Activated CD8-positive, alpha-beta T cell treated with anti-CD3 and anti-CD28 coated beads, Interleukin-2, amount 10 ng/mL, durations not matched to agents 7 days and 5 days (primary cell): ENCODE measurements at regions of chr9 and their contacts with region 1.

Region 1: DNA sequence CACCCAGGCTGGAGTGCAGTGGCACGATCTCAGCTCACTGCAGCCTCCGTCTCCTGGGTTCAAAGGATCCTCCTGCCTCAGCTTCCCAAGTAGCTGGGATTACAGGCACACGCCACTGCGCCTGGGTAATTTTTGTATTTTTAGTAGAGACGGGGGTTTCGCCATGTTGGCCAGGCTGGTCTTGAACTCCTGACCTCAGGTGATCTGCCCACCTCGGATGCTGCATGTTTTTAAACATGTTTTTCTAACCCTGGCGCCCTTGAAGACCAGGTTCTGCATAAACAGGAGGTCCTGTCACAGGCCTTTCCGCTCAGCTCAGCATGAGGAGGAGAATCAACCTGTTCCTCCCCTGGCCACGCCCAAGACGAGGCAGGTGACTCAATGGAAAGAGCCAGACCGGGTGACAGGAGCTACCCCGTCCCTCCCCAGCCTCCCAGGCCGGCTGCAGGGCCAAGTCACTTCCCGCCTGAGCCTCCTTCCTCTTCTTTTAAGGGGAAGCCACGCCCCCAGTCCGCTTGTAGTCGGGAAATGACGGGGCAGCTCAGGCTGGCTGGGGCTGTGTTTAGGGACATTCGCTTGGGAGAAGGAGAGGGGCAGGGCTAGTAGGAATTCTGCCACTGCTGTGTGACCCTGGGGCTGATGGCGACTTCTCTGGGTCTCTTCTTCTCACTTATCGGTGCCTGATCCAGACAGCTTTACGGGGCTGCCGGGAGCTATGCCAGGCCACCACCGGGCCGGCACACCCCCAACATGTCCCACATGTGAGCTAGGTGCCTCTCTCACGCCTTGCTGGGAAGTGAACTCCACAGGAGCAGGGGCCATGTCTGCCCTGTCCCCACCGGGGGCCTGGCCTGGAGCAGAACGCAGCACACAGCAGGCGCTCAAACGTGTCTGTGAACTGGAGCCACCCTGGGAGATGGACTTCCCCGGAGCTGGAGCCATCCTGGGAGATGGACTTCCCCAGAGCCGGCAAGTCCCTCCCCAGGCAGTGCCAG is 6.1 kb downstream of the NOTCH1 start:
- DNase-seq: peak; percentile 97
- ATAC-seq: peak; percentile 86
- H3K4me3 Mint-ChIP-seq: peak overlapping the region; percentile 79
- H3K27ac Mint-ChIP-seq: peak overlapping the region; percentile 99
- H3K4me1 Mint-ChIP-seq: peaks cover 80% of the 10 kb centered on the region
- H3K27me3 Mint-ChIP-seq: no peaks in the 10 kb centered on the region

Region 2: GRCh38 chr9:136488247-136489214 is 51.2 kb before region 1 on chr9:
- CTCF ChIA-PET with region 1: interaction called, 30 read pairs
- POLR2A ChIA-PET with region 1: interaction called, 4 read pairs
- DNase-seq: peak; percentile 81
- ATAC-seq: peak; percentile 34
- H3K4me3 Mint-ChIP-seq: no peak overlapping the region
- H3K27ac Mint-ChIP-seq: no peak overlapping the region
- H3K4me1 Mint-ChIP-seq: peaks cover 8% of the 10 kb centered on the region
- H3K27me3 Mint-ChIP-seq: no peaks in the 10 kb centered on the region

Region 3: GRCh38 chr9:136527721-136528691 is 11.7 kb before region 1 on chr9:
- CTCF ChIA-PET with region 1: interaction called, 8 read pairs
- POLR2A ChIA-PET with region 1: interaction called, 16 read pairs
- DNase-seq: no peak
- ATAC-seq: peak; percentile 31
- H3K4me3 Mint-ChIP-seq: no peak overlapping the region
- H3K27ac Mint-ChIP-seq: peak overlapping the region; percentile 43
- H3K4me1 Mint-ChIP-seq: peaks cover 43% of the 10 kb centered on the region
- H3K27me3 Mint-ChIP-seq: no peaks in the 10 kb centered on the region

Region 4: DNA sequence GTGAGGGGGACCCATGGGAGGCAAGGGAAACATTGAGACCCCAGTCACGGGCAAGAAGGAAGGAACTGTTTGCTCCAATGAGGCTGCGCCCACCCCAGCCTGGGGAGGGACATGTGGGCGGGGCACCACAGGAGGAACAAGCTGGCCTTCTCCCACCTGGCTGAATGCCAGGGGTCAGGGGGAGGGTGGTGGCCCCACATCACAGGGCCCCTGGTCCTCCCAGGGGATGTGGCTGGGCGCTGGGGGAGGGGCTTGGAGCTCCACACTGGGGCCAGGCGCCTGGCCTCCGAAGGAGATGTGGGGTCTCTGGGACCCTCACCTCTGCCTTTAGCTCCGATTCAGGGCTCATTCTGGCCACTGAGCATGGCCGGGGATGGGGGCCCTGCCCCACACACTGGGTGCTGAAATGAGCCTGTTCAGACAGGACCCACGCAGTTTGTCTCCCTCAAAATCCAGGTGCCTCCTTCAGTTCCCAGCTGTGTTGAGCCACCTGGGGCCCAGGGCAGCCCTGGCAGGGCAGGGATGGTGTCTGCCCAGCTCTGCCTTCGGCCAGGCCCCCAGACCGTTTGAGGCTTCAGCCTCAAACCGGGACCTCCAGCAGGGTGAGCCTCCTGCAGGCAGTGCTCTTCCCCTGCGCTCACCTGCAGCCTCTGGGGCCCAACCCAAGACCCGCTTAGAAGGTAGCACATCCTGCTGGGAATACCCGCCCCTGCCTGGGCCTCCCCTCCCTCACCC is 39.4 kb after region 1 on chr9:
- CTCF ChIA-PET with region 1: no interaction called
- POLR2A ChIA-PET with region 1: no interaction called
- DNase-seq: peak; percentile 36
- ATAC-seq: peak; percentile 60
- H3K4me3 Mint-ChIP-seq: no peak overlapping the region
- H3K27ac Mint-ChIP-seq: no peak overlapping the region
- H3K4me1 Mint-ChIP-seq: peaks cover 9% of the 10 kb centered on the region
- H3K27me3 Mint-ChIP-seq: no peaks in the 10 kb centered on the region

Region 5: GRCh38 chr9:136928591-136928990 is 388.9 kb after region 1 on chr9:
- CTCF ChIA-PET with region 1: no interaction called
- POLR2A ChIA-PET with region 1: no interaction called
- DNase-seq: no peak
- ATAC-seq: no peak
- H3K4me3 Mint-ChIP-seq: no peak overlapping the region
- H3K27ac Mint-ChIP-seq: peak overlapping the region; percentile 53
- H3K4me1 Mint-ChIP-seq: no peaks in the 10 kb centered on the region
- H3K27me3 Mint-ChIP-seq: no peaks in the 10 kb centered on the region